Activated CD4-positive, alpha-beta T cell treated with anti-CD3 and anti-CD28 coated beads for 36 hours (primary cell): ENCODE measurements at regions of chr2 and their contacts with region 1.

Region 1: DNA sequence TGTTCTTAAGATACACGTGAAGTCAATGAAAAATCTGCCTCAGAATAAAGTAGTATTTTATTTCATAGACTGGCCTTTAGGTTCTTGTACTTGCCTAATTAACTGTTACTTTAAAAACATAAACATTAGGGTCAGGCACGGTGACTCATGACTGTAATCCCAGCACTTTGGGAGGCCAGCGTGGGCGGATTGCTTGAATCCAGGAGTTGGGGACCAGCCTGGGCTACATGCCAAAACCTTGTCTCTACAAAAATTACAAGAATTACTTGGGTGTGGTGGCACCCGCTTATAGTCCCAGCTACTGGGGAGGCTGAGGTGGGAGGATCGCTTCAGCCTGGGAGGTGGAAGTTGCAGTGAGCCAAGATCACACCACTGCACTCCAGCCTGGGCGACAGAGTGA is 16.0 kb upstream of the SNORC start:
- DNase-seq: no peak
- ATAC-seq: no peak
- H3K4me3 Mint-ChIP-seq: no peak overlapping the region
- H3K27ac Mint-ChIP-seq: no peak overlapping the region
- H3K4me1 Mint-ChIP-seq: peaks cover 3% of the 10 kb centered on the region
- H3K27me3 Mint-ChIP-seq: no peaks in the 10 kb centered on the region

Region 2: DNA sequence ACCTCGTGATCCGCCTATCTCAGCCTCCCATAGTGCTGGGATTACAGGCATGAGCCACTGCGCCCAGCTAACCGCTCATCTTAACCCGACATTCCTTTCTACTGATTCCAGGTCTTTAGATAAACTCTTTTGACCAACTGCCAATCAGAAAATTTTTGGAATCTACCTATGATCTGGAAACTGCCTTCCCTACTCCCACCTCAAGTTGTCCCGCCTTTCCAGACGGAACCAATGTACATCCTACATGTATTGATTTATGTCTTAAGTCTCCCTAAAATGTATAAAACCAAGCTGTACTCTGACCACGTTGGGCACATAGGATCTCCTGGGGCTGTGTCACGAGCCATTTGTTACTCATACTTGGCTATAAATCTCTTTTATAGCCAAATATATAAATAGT is 175.2 kb after region 1 on chr2:
- CTCF ChIA-PET with region 1: interaction called, 4 read pairs
- POLR2A ChIA-PET with region 1: no interaction called
- intact Hi-C with region 1: loop called in 1 of 2 experiments (anchors 2 kb)
- DNase-seq: no peak
- ATAC-seq: no peak
- H3K4me3 Mint-ChIP-seq: no peak overlapping the region
- H3K27ac Mint-ChIP-seq: no peak overlapping the region
- H3K4me1 Mint-ChIP-seq: peaks cover 8% of the 10 kb centered on the region
- H3K27me3 Mint-ChIP-seq: no peaks in the 10 kb centered on the region